A549 (cell line): ENCODE measurements at regions of chr16 and their contacts with region 1.

Region 1: DNA sequence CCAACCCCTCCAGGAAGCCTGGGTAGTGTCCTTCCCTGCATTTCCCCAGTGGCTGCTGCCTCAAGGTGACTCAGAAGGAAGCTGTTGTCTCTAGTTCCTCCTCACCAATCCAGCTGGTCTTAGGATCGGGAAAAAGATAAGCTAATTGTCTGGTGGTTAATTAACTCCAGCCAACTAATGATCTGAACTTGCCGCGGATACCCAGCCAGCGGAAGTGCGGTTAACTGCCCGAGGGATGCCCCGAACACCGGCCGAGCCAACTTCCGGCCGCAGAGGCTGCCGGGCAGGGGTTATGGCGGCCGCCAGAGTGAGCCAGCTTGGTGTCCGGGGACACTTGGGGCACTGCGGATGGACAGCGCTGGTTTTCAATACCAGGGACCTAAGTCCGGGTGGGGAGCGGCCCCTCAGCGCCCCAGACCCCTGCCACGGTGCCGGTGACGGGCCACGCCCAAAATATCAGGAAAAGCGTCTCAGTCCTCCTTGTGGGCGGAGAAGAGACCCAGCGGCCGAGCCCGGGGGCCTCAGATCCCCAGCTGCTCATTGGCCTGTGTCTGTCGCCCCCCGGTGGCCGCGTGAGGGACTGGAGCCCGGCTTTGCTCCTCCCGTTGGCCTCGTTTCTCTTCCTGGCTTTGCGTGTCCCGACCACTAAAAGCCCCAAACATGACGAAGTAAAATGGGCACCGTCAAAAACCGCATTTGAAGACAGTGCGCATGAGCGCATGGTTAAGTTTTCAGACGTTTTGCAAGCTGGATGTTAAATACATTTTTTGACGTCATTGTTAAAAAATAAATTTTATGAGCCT is 10.2 kb upstream of the PRSS22 start:
- DNase-seq: peak; percentile 96 to 98
- ATAC-seq: peak; percentile 98 to 99
- H3K4me3 ChIP-seq: peak overlapping the region; percentile 59
- H3K27ac ChIP-seq: peak overlapping the region; percentile 90 to 95
- H3K4me1 ChIP-seq: 0 out of 3 replicates have a peak, but pooled peaks cover 3% of the 10 kb centered on the region
- CTCF ChIP-seq: peak; percentile 95
- EP300 ChIP-seq: no peak
- POLR2A ChIP-seq: peak; percentile 71
- RAD21 ChIP-seq: peak; percentile 92 to 99

Region 2: GRCh38 chr16:2777231-2777902 is 90.8 kb before region 1 on chr16 and contains the start of gene ELOB:
- CTCF ChIA-PET with region 1: interaction called, 28 read pairs
- POLR2A ChIA-PET with region 1: interaction called, 11 read pairs
- DNase-seq: peak; percentile 79 to 89
- ATAC-seq: peak; percentile 74 to 84
- H3K4me3 ChIP-seq: peak within 1 kb of the TSS; percentile 95
- H3K27ac ChIP-seq: peak within 1 kb of the TSS; percentile 99 to 100
- H3K4me1 ChIP-seq: peaks cover 26% of the 10 kb centered on the region
- CTCF ChIP-seq: no peak
- EP300 ChIP-seq: no peak
- POLR2A ChIP-seq: peak; percentile 70
- RAD21 ChIP-seq: 0 out of 5 replicates have a peak, but pooled peaks of 1 of the 2 experiments have one; percentile 12
- polyA plus RNA-seq, gene ELOB: 136 and 144 TPM in 2 replicates

Region 3: DNA sequence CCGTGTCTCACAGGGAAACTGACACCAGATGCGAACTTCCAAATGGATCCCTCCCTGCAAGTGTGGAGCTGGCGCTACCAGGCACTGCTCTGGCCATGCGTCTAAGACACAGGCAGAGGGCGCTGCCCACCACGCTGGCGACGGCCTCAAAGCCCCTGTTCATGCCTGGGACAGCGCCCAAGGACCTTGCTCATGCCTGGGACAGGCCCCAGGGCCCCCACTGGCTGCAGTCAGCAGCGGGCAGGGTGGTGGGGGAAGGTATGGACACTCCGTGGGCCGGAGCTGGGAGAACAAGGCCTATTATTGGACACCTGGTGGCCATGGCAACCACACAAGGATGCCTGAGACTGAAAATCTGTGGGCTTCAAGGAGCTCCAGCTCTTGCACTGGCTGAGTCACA is 29.3 kb before region 1 on chr16:
- CTCF ChIA-PET with region 1: interaction called, 295 read pairs
- POLR2A ChIA-PET with region 1: interaction called, 52 read pairs
- DNase-seq: peak; percentile 85 to 88
- ATAC-seq: peak; percentile 76 to 91
- H3K4me3 ChIP-seq: no peak overlapping the region
- H3K27ac ChIP-seq: peak overlapping the region; percentile 60 to 90
- H3K4me1 ChIP-seq: peaks cover 41% of the 10 kb centered on the region
- CTCF ChIP-seq: peak; percentile 86
- EP300 ChIP-seq: no peak
- POLR2A ChIP-seq: no peak
- RAD21 ChIP-seq: peak; percentile 90 to 96

Region 4: DNA sequence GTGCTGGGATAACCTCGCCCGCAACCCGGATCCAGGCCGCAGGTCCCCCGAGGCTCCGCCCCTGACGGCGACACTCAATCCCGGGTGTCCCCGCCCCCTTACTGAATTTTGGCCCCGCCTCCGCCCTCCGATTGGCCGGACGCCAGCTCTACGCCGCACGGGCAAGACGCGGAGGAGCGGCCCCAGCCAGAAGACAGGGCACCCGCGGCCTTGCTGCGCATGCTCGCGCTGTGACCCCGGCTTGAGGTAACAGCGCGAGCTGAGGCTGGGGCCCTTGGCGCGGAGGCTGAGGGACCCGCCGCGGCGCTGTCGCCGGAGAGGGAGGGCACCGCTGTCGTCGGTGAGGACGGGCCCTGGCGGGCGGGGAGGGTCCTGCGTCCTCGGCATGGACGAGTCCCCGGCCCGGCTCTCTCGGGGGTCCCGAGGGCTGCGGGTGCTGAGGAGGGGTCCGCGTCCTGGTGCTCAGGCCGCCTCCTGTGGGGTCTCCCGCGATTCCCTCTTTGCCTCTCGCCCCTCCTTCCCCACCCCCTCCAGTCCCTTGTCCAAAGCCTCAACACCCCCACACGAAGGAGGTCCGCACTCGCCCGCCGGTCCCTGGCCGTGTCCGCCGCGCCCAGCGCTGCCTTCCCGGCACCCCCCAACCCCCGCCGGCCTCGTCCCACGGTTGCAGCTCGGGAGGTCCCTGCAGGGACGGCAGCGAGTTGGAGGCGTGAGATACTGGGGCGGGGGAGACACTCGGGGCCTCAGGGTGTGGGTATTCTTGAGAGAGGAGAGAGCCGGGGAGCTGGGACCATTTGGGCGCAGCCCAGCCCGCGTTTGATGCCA is 15.1 kb after region 1 on chr16 and contains the start of gene FLYWCH2:
- CTCF ChIA-PET with region 1: interaction called, 52 read pairs
- POLR2A ChIA-PET with region 1: interaction called, 16 read pairs
- DNase-seq: peak; percentile 83 to 97
- ATAC-seq: peak; percentile 80 to 86
- H3K4me3 ChIP-seq: peak within 1 kb of the TSS; percentile 94
- H3K27ac ChIP-seq: peak within 1 kb of the TSS; percentile 96 to 97
- H3K4me1 ChIP-seq: peaks cover 5% of the 10 kb centered on the region; the same call in 2 of the 3 replicates
- CTCF ChIP-seq: no peak
- EP300 ChIP-seq: no peak
- POLR2A ChIP-seq: peak; percentile 87
- RAD21 ChIP-seq: no peak
- polyA plus RNA-seq, gene FLYWCH2: 22.7 and 23.2 TPM in 2 replicates

Region 5: GRCh38 chr16:2911580-2912329 is 43.6 kb after region 1 on chr16 and contains the start of gene FLYWCH1:
- CTCF ChIA-PET with region 1: interaction called, 14 read pairs
- POLR2A ChIA-PET with region 1: interaction called, 12 read pairs
- DNase-seq: peak; percentile 94 to 99
- ATAC-seq: peak; percentile 86 to 93
- H3K4me3 ChIP-seq: peak within 1 kb of the TSS; percentile 65
- H3K27ac ChIP-seq: peak within 1 kb of the TSS; percentile 86 to 97
- H3K4me1 ChIP-seq: peaks cover 25% of the 10 kb centered on the region
- CTCF ChIP-seq: no peak
- EP300 ChIP-seq: no peak
- POLR2A ChIP-seq: peak; percentile 73
- RAD21 ChIP-seq: no peak
- polyA plus RNA-seq, gene FLYWCH1: 9.3 and 10.6 TPM in 2 replicates